ENCODE measurements at regions of chr1 and their contacts with region 1.

Region 1: DNA sequence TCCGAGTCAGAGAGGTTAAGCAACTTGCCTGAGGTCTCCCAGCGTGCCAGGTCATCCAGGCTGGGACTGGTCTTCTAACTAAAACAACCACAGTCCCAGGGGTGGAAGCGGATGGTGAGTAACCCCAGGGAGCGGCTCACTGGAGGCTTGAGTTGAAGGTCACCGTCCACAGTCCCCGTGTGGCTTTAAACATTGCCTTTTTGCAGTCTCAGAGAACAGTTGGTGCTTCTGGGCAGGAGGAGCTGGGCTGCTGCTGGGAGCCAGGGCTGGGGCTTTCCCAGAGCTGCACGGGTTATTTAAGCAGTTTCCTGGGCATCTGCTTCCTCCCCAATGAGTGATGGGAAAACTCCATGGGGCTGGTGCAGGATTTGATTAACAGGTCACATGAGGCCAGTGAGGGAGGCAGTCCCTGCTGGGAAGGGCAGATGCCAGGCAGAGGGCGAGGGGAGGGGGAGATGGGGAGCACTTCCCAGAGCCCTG is 12.3 kb downstream of the ARHGEF10L start:
- DNase-seq: no peak
- ATAC-seq: peak; percentile 62
- H3K4me3 ChIP-seq: no peak overlapping the region
- H3K27ac ChIP-seq: no peak overlapping the region
- H3K4me1 ChIP-seq: no peaks in the 10 kb centered on the region
- H3K27me3 ChIP-seq: no peaks in the 10 kb centered on the region
- CTCF ChIP-seq: no peak
- EP300 ChIP-seq: no peak
- POLR2A ChIP-seq: no peak
- RAD21 ChIP-seq: no peak

Region 2: GRCh38 chr1:17250601-17251000 is 301.2 kb before region 1 on chr1:
- CTCF ChIA-PET with region 1: no interaction called
- POLR2A ChIA-PET with region 1: no interaction called
- RAD21 ChIA-PET with region 1: no interaction called
- SMC1A ChIA-PET with region 1: no interaction called
- in situ Hi-C with region 1: no loop called
- intact Hi-C with region 1: no loop called
- DNase-seq: no peak
- ATAC-seq: no peak
- H3K4me3 ChIP-seq: no peak overlapping the region
- H3K27ac ChIP-seq: no peak overlapping the region
- H3K4me1 ChIP-seq: peaks cover 3% of the 10 kb centered on the region; the same call in 1 of the 2 replicates
- H3K27me3 ChIP-seq: no peaks in the 10 kb centered on the region; a peak in 1 of 4 replicates
- CTCF ChIP-seq: no peak
- EP300 ChIP-seq: no peak
- POLR2A ChIP-seq: no peak
- RAD21 ChIP-seq: no peak

Region 3: DNA sequence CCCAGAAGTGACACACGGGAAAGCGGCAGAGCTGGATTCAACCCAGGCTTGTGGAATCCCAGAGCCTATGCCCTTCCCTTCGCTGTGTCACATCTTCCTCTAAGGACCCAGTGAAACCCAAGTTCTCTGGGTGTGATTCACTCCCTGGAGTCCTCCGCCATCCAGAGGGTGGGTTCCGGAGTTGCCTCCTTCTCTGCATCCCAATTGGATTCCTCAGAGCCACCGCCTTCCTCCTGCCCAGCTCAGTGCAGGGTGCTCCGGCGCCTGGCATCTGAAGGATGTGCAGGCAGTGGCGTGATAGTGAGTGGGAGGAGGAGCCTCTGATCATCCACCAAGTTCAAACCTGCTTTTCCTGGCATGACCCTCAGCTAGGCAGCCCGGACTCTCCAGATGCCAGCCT is 91.5 kb before region 1 on chr1:
- CTCF ChIA-PET with region 1: no interaction called
- POLR2A ChIA-PET with region 1: no interaction called
- RAD21 ChIA-PET with region 1: no interaction called
- SMC1A ChIA-PET with region 1: no interaction called
- in situ Hi-C with region 1: no loop called
- intact Hi-C with region 1: no loop called
- DNase-seq: no peak
- ATAC-seq: no peak
- H3K4me3 ChIP-seq: no peak overlapping the region
- H3K27ac ChIP-seq: no peak overlapping the region
- H3K4me1 ChIP-seq: no peaks in the 10 kb centered on the region
- H3K27me3 ChIP-seq: no peaks in the 10 kb centered on the region
- CTCF ChIP-seq: no peak
- EP300 ChIP-seq: no peak
- POLR2A ChIP-seq: no peak
- RAD21 ChIP-seq: no peak

Region 4: DNA sequence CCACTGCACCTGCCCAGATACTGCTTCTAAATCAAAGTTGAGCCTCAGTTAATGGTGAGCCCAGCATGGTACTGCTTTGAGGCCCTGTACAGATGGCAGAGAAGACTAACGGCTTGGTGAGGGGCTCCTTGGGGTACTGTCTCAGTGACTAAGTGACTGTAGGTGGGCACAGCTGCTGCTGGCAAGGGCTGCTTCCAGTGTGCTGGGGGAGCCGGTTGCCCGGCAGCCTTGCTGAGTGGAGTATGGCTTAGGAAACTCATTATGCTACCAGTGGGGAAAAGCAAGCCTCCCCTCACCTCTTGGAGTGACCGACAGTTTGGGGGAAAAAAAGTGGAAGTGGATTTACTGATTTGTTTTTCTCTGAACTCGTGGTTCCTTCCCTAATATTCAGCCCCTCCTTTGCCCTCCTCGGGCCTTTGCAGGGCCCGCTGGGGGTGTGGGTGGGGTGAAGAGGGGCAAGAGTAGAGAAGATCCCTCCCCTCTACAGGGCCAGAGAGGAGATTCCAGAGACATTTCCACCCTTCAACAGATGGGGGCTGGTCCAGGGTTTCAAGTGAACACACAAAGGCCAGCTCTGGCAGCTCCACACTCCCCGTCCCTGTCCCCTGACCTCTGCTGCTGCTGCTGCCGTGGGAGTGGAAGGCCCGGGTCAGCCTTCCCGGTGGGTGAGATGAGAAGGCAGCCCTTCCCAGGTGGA is 35.7 kb before region 1 on chr1:
- CTCF ChIA-PET with region 1: no interaction called
- POLR2A ChIA-PET with region 1: no interaction called
- RAD21 ChIA-PET with region 1: no interaction called
- SMC1A ChIA-PET with region 1: no interaction called
- in situ Hi-C with region 1: no loop called
- intact Hi-C with region 1: no loop called
- DNase-seq: no peak
- ATAC-seq: no peak
- H3K4me3 ChIP-seq: no peak overlapping the region
- H3K27ac ChIP-seq: no peak overlapping the region
- H3K4me1 ChIP-seq: no peaks in the 10 kb centered on the region
- H3K27me3 ChIP-seq: peaks cover 0 to 3% of the 10 kb centered on the region in 2 experiments; a peak in 2 of 4 replicates
- CTCF ChIP-seq: no peak
- EP300 ChIP-seq: no peak
- POLR2A ChIP-seq: no peak
- RAD21 ChIP-seq: no peak

Region 5: DNA sequence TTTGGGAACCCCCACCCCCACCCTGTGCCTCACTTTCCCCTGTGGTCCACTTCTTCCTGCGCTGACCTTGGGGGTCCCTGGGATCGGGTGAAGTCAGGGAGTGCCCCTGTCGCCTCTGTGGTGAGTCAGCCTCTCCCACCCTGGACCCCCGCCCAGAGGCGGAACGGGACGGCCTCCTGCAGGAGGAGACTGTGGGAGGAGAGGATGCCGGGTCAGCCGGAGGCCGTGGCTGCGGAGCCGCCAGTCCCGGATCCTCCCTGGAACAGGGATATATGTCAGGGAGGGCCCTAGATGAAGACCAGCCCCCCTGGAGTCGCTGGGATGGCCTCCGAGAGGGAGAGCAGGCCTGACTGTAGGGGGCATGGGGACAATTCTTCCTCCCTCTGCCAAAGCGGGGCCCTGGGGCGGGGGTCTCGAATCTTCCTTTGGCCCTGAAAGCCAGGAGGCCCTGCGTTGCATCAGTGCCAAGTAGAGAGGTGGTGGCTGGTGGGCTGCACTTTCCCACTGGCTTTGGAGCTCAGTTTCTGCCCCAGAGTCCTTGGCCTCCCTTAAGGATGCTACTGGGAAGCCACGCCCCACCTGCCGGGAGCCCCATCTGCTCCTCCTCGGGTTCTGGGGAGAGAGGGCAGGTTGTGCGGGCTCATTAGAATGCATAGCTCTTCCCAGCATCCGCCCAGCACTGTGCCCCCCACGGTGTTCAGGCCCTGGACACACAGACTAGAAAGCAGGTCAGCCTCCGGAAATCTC is 11.4 kb before region 1 on chr1:
- CTCF ChIA-PET with region 1: interaction called, 7 read pairs
- POLR2A ChIA-PET with region 1: interaction called, 4 read pairs
- RAD21 ChIA-PET with region 1: interaction called, 5 read pairs
- SMC1A ChIA-PET with region 1: interaction called, 10 read pairs
- in situ Hi-C with region 1: no loop called
- intact Hi-C with region 1: no loop called
- DNase-seq: no peak
- ATAC-seq: no peak
- H3K4me3 ChIP-seq: no peak overlapping the region
- H3K27ac ChIP-seq: no peak overlapping the region
- H3K4me1 ChIP-seq: peaks cover 17% of the 10 kb centered on the region
- H3K27me3 ChIP-seq: peaks cover 4 to 5% of the 10 kb centered on the region in 2 experiments; a peak in 3 of 4 replicates
- CTCF ChIP-seq: no peak
- EP300 ChIP-seq: no peak
- POLR2A ChIP-seq: no peak
- RAD21 ChIP-seq: no peak

Region 6: GRCh38 chr1:17564458-17565393 is 12.9 kb after region 1 on chr1:
- CTCF ChIA-PET with region 1: no interaction called
- POLR2A ChIA-PET with region 1: no interaction called
- RAD21 ChIA-PET with region 1: no interaction called
- SMC1A ChIA-PET with region 1: interaction called, 10 read pairs
- in situ Hi-C with region 1: no loop called
- intact Hi-C with region 1: no loop called
- DNase-seq: no peak
- ATAC-seq: no peak
- H3K4me3 ChIP-seq: no peak overlapping the region
- H3K27ac ChIP-seq: no peak overlapping the region
- H3K4me1 ChIP-seq: no peaks in the 10 kb centered on the region
- H3K27me3 ChIP-seq: peaks cover 4 to 8% of the 10 kb centered on the region in 2 experiments; a peak in 3 of 4 replicates
- CTCF ChIP-seq: no peak
- EP300 ChIP-seq: no peak
- POLR2A ChIP-seq: no peak
- RAD21 ChIP-seq: no peak

Measured in GM12878 (cell line).